Posterior cingulate gyrus (tissue), 11 donors: ENCODE measurements at regions of chrX and their contacts with region 1.

Region 1: GRCh38 chrX:106952988-106953387 is 32.8 kb downstream of the CLDN2 start:
- DNase-seq: no peak

Region 2: DNA sequence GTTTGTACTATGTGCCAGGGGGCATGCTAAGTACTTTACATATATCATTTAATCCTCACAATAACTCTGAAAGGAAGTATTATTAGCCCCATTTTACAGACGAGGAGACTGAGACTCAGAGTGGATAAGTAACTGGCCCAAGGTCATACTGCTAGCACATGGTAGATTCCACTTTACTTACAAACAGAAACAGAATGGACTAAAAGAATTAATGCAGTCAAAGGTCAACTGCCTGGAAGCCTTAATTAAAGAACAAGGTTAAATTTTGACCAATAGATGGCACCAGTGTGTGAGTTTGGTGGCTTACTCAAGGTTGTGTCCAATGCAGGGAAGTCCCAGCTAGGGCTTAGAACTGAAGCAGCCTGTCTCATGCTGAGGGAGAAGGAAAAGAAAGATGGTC is 54.5 kb before region 1 on chrX:
- intact Hi-C with region 1: loop called (anchors 5 kb)
- DNase-seq: no peak